Right ventricle myocardium inferior (tissue), 1 donor: ENCODE measurements at regions of chr1 and their contacts with region 1.

Region 1: GRCh38 chr1:112955781-112956543 is at the start of gene SLC16A1:
- DNase-seq: peak; percentile 97
- ATAC-seq: peak; percentile 97
- total RNA-seq, gene SLC16A1: 137 TPM

Region 2: GRCh38 chr1:112619520-112620376 is 336.2 kb before region 1 on chr1 and contains the start of gene CAPZA1:
- intact Hi-C with region 1: loop called (anchors 5 kb)
- DNase-seq: peak; percentile 96
- ATAC-seq: peak; percentile 99
- total RNA-seq, gene CAPZA1: 30.5 TPM

Region 3: DNA sequence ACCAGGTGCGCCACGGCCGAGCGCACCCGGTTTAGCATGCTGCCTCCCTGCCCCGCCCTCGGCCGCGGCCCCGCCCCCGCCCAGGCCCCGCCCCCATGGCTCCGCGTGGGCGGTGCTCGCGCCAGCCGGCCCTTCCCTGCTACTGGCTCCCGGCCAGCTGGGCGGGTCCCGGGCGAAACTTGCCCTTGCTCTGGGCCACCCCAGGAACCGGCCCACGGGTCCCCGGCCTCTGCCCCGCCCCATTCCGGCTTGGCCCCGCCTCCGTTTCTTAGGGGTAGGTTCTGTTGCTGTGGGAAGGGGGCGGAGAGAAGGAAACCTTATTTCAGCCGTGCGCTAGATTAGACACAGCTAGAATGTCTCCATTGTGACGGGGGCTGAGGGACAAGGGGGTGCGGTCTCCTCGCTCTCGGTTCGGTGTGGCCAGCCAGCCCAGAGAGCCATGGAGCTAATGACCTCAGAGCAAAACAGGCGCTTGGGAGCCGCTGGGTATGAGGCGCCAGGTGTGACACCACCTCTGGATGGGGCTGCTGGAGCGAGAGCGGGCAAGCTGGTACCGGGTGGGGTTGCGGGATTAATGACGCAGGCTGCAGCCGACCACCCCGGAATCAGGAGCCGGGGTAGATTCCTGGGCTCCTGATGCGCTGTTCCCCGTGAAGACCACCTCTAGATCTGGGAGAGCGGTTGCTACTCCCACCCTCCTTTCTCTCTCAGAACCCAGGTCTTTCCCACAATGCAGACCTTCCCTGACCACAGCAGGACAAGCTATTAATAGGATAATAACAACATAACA is 240.5 kb before region 1 on chr1 and contains the start of gene PPM1J:
- intact Hi-C with region 1: loop called (anchors 5 kb)
- DNase-seq: peak; percentile 99
- ATAC-seq: peak; percentile 89
- total RNA-seq, gene PPM1J: 5.3 TPM

Region 4: GRCh38 chr1:112809253-112809684 is 146.7 kb before region 1 on chr1:
- intact Hi-C with region 1: loop called (anchors 2 kb)
- DNase-seq: peak; percentile 80
- ATAC-seq: peak; percentile 77

Region 5: DNA sequence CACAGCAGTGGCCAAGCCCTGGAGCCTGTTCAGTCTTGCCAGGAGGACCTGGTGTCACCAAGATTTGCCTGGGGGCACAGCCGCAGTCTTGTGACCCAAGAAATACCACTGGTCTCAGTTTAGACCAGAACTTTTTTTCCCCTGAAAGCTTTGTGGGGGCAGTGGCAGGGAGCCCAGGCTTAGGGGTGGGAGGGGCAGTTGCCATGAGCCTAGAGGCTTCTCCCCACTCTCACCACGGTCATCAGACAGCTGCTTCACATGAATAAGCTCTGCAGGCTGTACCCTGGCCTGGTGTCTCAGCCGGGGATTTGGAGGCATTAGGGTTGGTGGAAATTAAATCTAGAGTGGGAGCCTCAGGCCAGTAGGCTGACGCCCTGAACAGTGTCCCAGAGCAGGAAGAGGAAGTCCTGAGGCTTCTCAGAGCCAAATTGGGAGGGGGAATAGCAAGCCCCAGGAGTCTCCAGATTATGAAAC is 73.7 kb before region 1 on chr1:
- intact Hi-C with region 1: loop called (anchors 2 kb)
- DNase-seq: no peak
- ATAC-seq: peak; percentile 62

Region 6: GRCh38 chr1:112998592-112999235 is 42.8 kb after region 1 on chr1:
- intact Hi-C with region 1: loop called (anchors 5 kb)
- DNase-seq: peak; percentile 80
- ATAC-seq: peak; percentile 85

Region 7: GRCh38 chr1:113031171-113031933 is 75.4 kb after region 1 on chr1:
- intact Hi-C with region 1: loop called (anchors 2 kb)
- DNase-seq: no peak
- ATAC-seq: no peak